ENCODE measurements at regions of chr4 and their contacts with region 1.

Region 1: GRCh38 chr4:54440394-54441136 is 211.5 kb downstream of the PDGFRA start:
- DNase-seq: peak; percentile 53 to 60 (median 60)
- H3K4me3 ChIP-seq: peak overlapping the region in 1 of 7 experiments; percentile 62
- H3K27ac ChIP-seq: no peak overlapping the region
- H3K4me1 ChIP-seq: peaks cover 0 to 23% (median 5%) of the 10 kb centered on the region in 4 experiments
- H3K27me3 ChIP-seq: no peaks in the 10 kb centered on the region

Region 2: DNA sequence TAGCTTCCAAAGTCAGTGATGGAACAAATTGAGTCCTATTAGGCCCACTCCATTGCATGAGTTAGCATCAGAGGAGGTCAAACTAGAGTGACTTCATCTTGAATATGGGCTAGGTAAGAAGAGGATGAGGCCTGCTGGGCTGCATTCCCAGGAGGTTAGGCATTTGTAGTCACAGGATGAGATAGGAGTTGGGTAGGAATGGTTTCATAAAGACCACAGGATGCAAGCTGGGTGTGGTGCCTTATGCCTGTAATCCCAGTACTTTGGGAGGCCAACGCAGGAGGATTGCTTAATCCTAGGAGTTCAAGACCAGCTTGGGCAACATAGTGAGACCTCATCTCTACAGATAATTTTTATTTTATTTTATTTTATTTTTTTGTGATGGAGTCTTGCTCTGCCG is 184.7 kb before region 1 on chr4:
- CTCF ChIA-PET with region 1: no interaction called
- POLR2A ChIA-PET with region 1: no interaction called
- DNase-seq: no peak
- H3K4me3 ChIP-seq: no peak overlapping the region
- H3K27ac ChIP-seq: no peak overlapping the region
- H3K4me1 ChIP-seq: no peaks in the 10 kb centered on the region
- H3K27me3 ChIP-seq: no peaks in the 10 kb centered on the region

Region 3: DNA sequence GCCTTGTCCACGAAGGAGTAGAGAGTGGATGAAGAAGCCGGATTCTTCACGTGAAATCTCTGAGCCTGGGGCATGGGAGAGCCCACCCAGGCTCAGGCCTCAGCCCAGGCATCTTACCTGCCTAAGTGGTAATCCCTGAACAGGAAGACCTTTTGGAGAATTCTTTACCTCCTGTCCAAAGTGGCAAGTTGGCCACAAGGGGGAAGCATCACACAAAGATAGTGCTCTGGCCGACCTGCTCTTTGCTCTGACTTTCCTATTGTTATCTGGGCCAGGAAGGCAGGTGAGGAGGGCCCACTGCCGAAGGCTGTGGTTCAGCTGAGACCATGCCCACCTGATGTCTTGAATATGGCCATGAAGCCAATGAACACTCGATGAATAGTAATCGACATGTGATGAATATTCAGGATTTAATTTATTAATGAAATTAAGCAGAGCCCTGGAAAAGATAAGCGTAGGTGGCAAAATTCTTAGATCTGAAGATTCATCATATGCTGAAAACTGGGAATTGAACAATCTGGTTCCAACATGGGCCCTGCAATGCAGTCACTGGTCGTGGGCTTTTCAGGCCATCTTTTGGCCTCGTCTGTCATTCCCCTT is 117.6 kb before region 1 on chr4:
- CTCF ChIA-PET with region 1: interaction called, 10 read pairs
- POLR2A ChIA-PET with region 1: no interaction called
- DNase-seq: peak; percentile 65 to 75 (median 72)
- H3K4me3 ChIP-seq: no peak overlapping the region
- H3K27ac ChIP-seq: no peak overlapping the region
- H3K4me1 ChIP-seq: no peaks in the 10 kb centered on the region
- H3K27me3 ChIP-seq: no peaks in the 10 kb centered on the region

Region 4: DNA sequence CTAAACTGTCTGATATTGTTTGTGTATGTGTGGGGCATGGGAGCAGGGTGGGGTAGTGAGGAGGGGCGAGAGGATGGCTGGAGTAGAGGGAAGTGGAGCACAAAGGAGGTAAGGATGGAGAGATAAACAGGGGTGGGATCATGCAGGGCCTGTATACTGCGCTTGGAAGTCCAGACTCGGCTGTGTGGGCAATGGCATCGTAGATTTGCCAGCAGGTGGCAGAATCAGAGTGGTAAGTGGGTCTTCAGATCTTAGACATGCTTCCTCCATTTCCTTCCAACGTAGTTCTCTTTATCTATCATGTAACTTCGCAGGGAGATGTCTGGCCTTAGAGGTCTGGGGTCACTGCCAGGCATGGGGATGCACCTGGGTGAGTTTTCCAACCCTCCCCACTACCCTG is 56.0 kb before region 1 on chr4:
- CTCF ChIA-PET with region 1: interaction called, 50 read pairs
- POLR2A ChIA-PET with region 1: no interaction called
- DNase-seq: peak; percentile 73 to 84 (median 80)
- H3K4me3 ChIP-seq: no peak overlapping the region
- H3K27ac ChIP-seq: no peak overlapping the region
- H3K4me1 ChIP-seq: peaks cover 0 to 5% (median 2%) of the 10 kb centered on the region in 4 experiments
- H3K27me3 ChIP-seq: no peaks in the 10 kb centered on the region

Region 5: DNA sequence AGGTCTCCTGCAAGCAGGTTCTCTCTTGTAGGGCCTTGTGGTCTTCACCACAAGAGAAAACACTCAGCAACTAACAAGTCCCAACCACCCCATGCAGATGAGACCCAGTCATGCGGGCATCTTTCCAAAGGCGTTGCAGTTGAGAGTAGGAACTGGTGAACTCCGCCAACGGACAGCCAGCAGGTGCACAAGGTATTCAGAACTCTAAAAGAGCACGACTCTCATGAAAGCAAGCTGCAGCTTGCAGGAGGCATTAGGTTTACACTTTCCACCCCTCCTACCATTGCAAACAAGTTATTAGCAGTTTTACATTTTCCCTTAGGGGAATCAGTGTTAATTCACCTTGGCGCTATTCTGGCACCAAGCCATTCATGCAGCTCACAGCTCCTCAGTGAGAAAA is 43.8 kb after region 1 on chr4:
- CTCF ChIA-PET with region 1: no interaction called
- POLR2A ChIA-PET with region 1: no interaction called
- DNase-seq: no peak
- H3K4me3 ChIP-seq: no peak overlapping the region
- H3K27ac ChIP-seq: no peak overlapping the region
- H3K4me1 ChIP-seq: no peaks in the 10 kb centered on the region
- H3K27me3 ChIP-seq: no peaks in the 10 kb centered on the region

Region 6: DNA sequence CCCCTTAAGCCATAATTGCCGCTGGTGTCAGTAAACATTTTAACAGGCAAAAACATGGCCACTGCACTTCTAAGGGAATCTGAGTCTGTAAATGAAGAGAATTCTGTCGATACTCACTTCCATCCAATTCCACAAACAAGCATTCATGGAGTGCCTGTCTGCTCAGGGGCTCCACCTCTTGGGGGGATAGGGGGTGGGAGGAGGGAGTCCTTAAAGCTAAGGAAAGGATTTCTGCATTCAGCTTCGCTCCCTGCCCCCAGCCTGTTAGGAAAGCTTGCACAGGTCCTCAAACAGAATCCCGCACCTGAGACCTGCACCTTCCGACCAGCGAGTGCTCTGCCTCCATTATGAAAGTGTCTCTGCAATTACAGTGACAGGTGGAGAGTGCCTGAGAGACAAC is 87.0 kb after region 1 on chr4:
- CTCF ChIA-PET with region 1: no interaction called
- POLR2A ChIA-PET with region 1: no interaction called
- DNase-seq: no peak
- H3K4me3 ChIP-seq: no peak overlapping the region
- H3K27ac ChIP-seq: no peak overlapping the region
- H3K4me1 ChIP-seq: no peaks in the 10 kb centered on the region
- H3K27me3 ChIP-seq: no peaks in the 10 kb centered on the region

Region 7: DNA sequence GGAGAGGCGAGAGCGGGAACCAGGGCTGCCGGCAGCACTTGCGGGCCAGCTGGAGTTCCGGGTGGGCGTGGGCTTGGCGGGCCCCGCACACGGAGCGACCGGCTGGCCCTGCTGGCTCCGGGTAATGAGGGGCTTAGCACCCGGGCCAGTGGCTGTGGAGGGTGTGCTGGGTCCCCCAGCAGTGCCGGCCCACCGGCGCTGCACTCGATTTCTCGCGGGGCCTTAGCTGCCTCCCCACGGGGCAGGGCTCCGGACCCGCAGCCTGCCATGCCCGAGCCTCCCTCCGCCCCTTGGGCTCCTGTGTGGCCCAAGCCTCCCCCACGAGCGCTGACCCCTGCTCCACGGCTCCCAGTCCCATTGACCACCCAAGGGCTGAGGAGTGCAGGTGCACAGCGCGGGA is 192.0 kb after region 1 on chr4:
- CTCF ChIA-PET with region 1: no interaction called
- POLR2A ChIA-PET with region 1: no interaction called
- DNase-seq: no peak
- H3K4me3 ChIP-seq: no peak overlapping the region
- H3K27ac ChIP-seq: no peak overlapping the region
- H3K4me1 ChIP-seq: peaks cover 0 to 3% (median 0%) of the 10 kb centered on the region in 4 experiments
- H3K27me3 ChIP-seq: peaks cover 0 to 2% (median 0%) of the 10 kb centered on the region in 5 experiments

Measured in common myeloid progenitor, CD34-positive (primary cell).